PC-3 (cell line): ENCODE measurements at regions of chrX and their contacts with region 1.

Region 1: DNA sequence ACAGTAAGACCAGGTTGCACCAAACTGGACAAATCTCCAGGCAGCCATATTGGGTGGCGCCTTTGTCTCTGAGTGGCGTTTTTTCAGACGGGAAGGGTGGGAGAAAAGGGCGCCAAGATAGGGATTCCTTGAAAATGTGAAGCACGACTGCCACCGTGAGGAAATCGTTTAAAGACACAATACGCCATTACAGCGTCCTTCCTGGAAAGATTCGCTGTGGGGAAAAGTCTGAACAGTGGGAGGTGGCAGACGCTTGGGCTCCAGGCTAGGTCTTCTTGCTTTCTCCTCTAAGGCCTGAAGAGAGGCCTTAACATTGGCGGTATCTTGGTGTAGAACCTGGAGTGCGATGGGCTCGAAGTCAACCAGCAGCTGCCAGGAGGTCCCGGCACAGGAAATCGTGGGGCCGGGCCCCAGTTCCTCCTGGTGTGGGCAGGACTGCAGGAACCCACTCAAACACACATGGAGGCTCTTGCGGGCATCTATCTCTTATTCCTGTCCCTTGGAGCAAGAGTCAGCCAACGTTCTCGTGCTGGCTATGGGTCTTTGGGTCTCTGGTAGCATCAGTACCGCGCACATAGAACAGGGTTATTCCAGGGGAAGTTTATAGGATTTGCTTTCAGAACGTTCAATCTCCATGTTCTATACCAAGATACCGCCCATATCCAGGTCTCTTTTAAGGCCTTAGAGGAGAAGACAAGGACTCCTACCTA is 208.8 kb downstream of the OR13H1 start:
- DNase-seq: peak; percentile 60
- ATAC-seq: peak; percentile 50
- H3K4me3 ChIP-seq: peak overlapping the region; percentile 60
- H3K27ac ChIP-seq: 0 out of 2 replicates have a peak overlapping the region, but pooled peaks have one; percentile 16
- H3K4me1 ChIP-seq: no peaks in the 10 kb centered on the region; the same call in 1 of the 2 replicates
- H3K27me3 ChIP-seq: no peaks in the 10 kb centered on the region
- CTCF ChIP-seq: no peak

Region 2: GRCh38 chrX:131704136-131704695 is 48.4 kb before region 1 on chrX:
- CTCF ChIA-PET with region 1: no interaction called
- POLR2A ChIA-PET with region 1: no interaction called
- intact Hi-C with region 1: no loop called
- DNase-seq: peak; percentile 37
- ATAC-seq: no peak; the same call in 1 of the 2 replicates
- H3K4me3 ChIP-seq: no peak overlapping the region
- H3K27ac ChIP-seq: no peak overlapping the region
- H3K4me1 ChIP-seq: no peaks in the 10 kb centered on the region
- H3K27me3 ChIP-seq: no peaks in the 10 kb centered on the region
- CTCF ChIP-seq: no peak; the same call in 1 of the 2 replicates

Region 3: DNA sequence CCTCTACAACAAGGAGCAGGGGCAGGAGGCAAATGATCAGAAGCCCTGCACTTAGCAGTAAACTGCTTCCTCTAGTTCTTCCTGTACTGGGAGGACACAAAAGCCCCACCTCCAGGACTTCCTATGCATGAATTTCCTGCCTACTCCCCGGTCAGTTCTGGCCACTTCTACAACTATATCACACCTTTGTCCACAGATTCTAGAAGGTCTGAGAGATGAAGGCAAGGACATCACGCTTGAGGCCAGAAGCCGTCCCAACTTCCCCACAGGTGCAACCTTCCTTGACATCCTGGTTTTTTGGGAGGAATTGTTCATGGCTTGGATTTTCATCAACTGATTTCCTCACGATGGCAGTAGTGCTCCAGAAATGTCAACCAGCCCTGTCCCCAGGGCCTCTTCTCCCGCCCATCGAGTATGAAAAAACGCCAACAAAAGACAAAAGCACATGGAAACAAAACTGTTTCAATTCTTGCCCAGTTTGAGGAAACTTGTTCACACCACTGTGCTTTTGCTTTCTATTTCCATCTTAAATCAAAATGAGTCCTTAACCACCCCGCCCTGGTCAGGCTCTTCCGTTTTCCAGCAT is 64.0 kb after region 1 on chrX:
- CTCF ChIA-PET with region 1: no interaction called
- POLR2A ChIA-PET with region 1: no interaction called
- intact Hi-C with region 1: loop called (anchors 2 kb)
- DNase-seq: peak; percentile 83
- ATAC-seq: peak; percentile 57
- H3K4me3 ChIP-seq: peak overlapping the region; percentile 44
- H3K27ac ChIP-seq: peak overlapping the region; percentile 36
- H3K4me1 ChIP-seq: peaks cover 9% of the 10 kb centered on the region; the same call in 1 of the 2 replicates
- H3K27me3 ChIP-seq: no peaks in the 10 kb centered on the region
- CTCF ChIP-seq: peak; percentile 71